PC-3 (cell line): ENCODE measurements at regions of chr18 and their contacts with region 1.

Region 1: GRCh38 chr18:9328776-9329175 is 5.8 kb upstream of the TWSG1 start:
- DNase-seq: peak; percentile 72
- ATAC-seq: peak; percentile 51
- H3K4me3 ChIP-seq: peak overlapping the region; percentile 36
- H3K27ac ChIP-seq: peak overlapping the region; percentile 90
- H3K4me1 ChIP-seq: peaks cover 29% of the 10 kb centered on the region
- H3K27me3 ChIP-seq: no peaks in the 10 kb centered on the region
- CTCF ChIP-seq: no peak

Region 2: GRCh38 chr18:9066817-9067306 is 261.9 kb before region 1 on chr18:
- CTCF ChIA-PET with region 1: no interaction called
- POLR2A ChIA-PET with region 1: no interaction called
- intact Hi-C with region 1: loop called (anchors 2 kb)
- DNase-seq: no peak
- ATAC-seq: no peak
- H3K4me3 ChIP-seq: no peak overlapping the region
- H3K27ac ChIP-seq: no peak overlapping the region
- H3K4me1 ChIP-seq: peaks cover 14% of the 10 kb centered on the region
- H3K27me3 ChIP-seq: no peaks in the 10 kb centered on the region
- CTCF ChIP-seq: no peak

Region 3: GRCh38 chr18:9249254-9249653 is 79.5 kb before region 1 on chr18:
- CTCF ChIA-PET with region 1: interaction called, 6 read pairs
- POLR2A ChIA-PET with region 1: no interaction called
- intact Hi-C with region 1: loop called (anchors 1 kb)
- DNase-seq: peak; percentile 49
- ATAC-seq: peak; percentile 97
- H3K4me3 ChIP-seq: no peak overlapping the region
- H3K27ac ChIP-seq: no peak overlapping the region
- H3K4me1 ChIP-seq: no peaks in the 10 kb centered on the region
- H3K27me3 ChIP-seq: no peaks in the 10 kb centered on the region
- CTCF ChIP-seq: no peak

Region 4: GRCh38 chr18:9287036-9287435 is 41.7 kb before region 1 on chr18:
- CTCF ChIA-PET with region 1: no interaction called
- POLR2A ChIA-PET with region 1: interaction called, 3 read pairs
- intact Hi-C with region 1: loop called (anchors 2 kb)
- DNase-seq: peak; percentile 86
- ATAC-seq: peak; percentile 93
- H3K4me3 ChIP-seq: no peak overlapping the region
- H3K27ac ChIP-seq: no peak overlapping the region
- H3K4me1 ChIP-seq: peaks cover 6% of the 10 kb centered on the region
- H3K27me3 ChIP-seq: no peaks in the 10 kb centered on the region
- CTCF ChIP-seq: no peak

Region 5: DNA sequence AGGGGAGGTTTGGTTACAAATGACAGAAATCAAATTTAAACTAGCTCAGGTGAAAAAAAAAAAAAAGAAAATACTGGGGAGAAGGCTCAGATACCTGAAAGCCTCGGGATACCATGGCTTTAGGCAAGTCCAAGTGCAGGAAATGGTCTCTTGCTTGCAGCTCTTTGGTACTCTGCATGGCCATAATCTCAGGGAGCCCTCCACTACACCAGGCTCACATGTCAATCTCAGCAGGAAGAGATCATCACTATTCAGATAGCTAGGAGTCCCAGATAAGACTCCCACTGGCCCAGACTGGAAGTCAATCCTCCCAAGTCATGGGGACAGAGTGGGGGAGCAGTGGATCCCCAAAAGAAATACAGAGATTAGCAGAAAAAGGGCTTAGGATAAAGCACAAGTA is 81.7 kb after region 1 on chr18:
- CTCF ChIA-PET with region 1: no interaction called
- POLR2A ChIA-PET with region 1: no interaction called
- intact Hi-C with region 1: no loop called
- DNase-seq: no peak
- ATAC-seq: no peak
- H3K4me3 ChIP-seq: no peak overlapping the region
- H3K27ac ChIP-seq: no peak overlapping the region
- H3K4me1 ChIP-seq: no peaks in the 10 kb centered on the region
- H3K27me3 ChIP-seq: no peaks in the 10 kb centered on the region
- CTCF ChIP-seq: no peak

Region 6: GRCh38 chr18:10015941-10016819 is 687.4 kb after region 1 on chr18:
- CTCF ChIA-PET with region 1: no interaction called
- POLR2A ChIA-PET with region 1: no interaction called
- intact Hi-C with region 1: no loop called
- DNase-seq: peak; percentile 63
- ATAC-seq: peak; percentile 66
- H3K4me3 ChIP-seq: no peak overlapping the region
- H3K27ac ChIP-seq: 0 out of 2 replicates have a peak overlapping the region, but pooled peaks have one; percentile 2
- H3K4me1 ChIP-seq: peaks cover 31% of the 10 kb centered on the region
- H3K27me3 ChIP-seq: peaks cover 12% of the 10 kb centered on the region; the same call in 1 of the 2 replicates
- CTCF ChIP-seq: peak; percentile 44; the same call in 1 of the 2 replicates